WTC11 (cell line): ENCODE measurements at regions of chr7 and their contacts with region 1.

Region 1: GRCh38 chr7:25148772-25149575 is 23.9 kb upstream of the CYCS start:
- DNase-seq: no peak
- ATAC-seq: no peak
- H3K4me3 Mint-ChIP-seq: no peak overlapping the region
- H3K27ac Mint-ChIP-seq: peak overlapping the region; percentile 15
- H3K4me1 Mint-ChIP-seq: peaks cover 18% of the 10 kb centered on the region
- H3K27me3 Mint-ChIP-seq: no peaks in the 10 kb centered on the region
- CTCF ChIP-seq: no peak

Region 2: GRCh38 chr7:25125137-25125946 is 23.6 kb before region 1 on chr7 and contains the start of gene CYCS:
- CTCF ChIA-PET with region 1: interaction called, 13 read pairs
- POLR2A ChIA-PET with region 1: interaction called, 3 read pairs
- DNase-seq: peak; percentile 99
- ATAC-seq: peak; percentile 97
- H3K4me3 Mint-ChIP-seq: peak within 1 kb of the TSS; percentile 94
- H3K27ac Mint-ChIP-seq: peak within 1 kb of the TSS; percentile 99
- H3K4me1 Mint-ChIP-seq: peaks cover 10% of the 10 kb centered on the region
- H3K27me3 Mint-ChIP-seq: peaks cover 26% of the 10 kb centered on the region
- CTCF ChIP-seq: no peak
- total RNA-seq, gene CYCS: 215 to 249 TPM (median 217 TPM) in 3 replicates